Gastrocnemius medialis (tissue), 4 donors: ENCODE measurements at regions of chr9 and their contacts with region 1.

Region 1: GRCh38 chr9:35116898-35117551 is 1.4 kb upstream of the ATOSB start:
- DNase-seq: peak; percentile 86 to 90
- ATAC-seq: peak; percentile 84 to 85
- H3K4me3 ChIP-seq: peak overlapping the region; percentile 58 to 73 (median 68)
- H3K27ac ChIP-seq: peak overlapping the region; percentile 83 to 92 (median 84)
- H3K4me1 ChIP-seq: peaks cover 21 to 22% of the 10 kb centered on the region in 2 donors
- H3K27me3 ChIP-seq: no peaks in the 10 kb centered on the region
- CTCF ChIP-seq: peak; percentile 86 to 97 (median 93)
- POLR2A ChIP-seq: no peak

Region 2: GRCh38 chr9:34458013-34458958 is 658.7 kb before region 1 on chr9 and contains the starts of genes DNAI1 and FAM219A:
- in situ Hi-C with region 1: no loop called
- intact Hi-C with region 1: loop called (anchors 10 kb)
- DNase-seq: peak; percentile 98
- ATAC-seq: peak; percentile 89 to 92
- H3K4me3 ChIP-seq: peak within 1 kb of the TSS; percentile 68 to 95 (median 80)
- H3K27ac ChIP-seq: peak within 1 kb of the TSS; percentile 79 to 94 (median 90)
- H3K4me1 ChIP-seq: peaks cover 38 to 53% of the 10 kb centered on the region in 2 donors
- H3K27me3 ChIP-seq: no peaks in the 10 kb centered on the region
- CTCF ChIP-seq: no peak
- POLR2A ChIP-seq: peak; percentile 97 to 98
- total RNA-seq, gene DNAI1: 0.49 TPM in 1 of 4 donors, not detected in the others
- total RNA-seq, gene FAM219A: 29.5 to 58.4 (median 41.8) TPM

Region 3: GRCh38 chr9:35193762-35194161 is 76.7 kb after region 1 on chr9:
- in situ Hi-C with region 1: no loop called
- intact Hi-C with region 1: no loop called
- DNase-seq: peak in 1 of 2 donors; percentile 17
- ATAC-seq: no peak
- H3K4me3 ChIP-seq: no peak overlapping the region
- H3K27ac ChIP-seq: peak overlapping the region in 1 of 4 donors; percentile 0
- H3K4me1 ChIP-seq: peaks cover 12 to 22% of the 10 kb centered on the region in 2 donors
- H3K27me3 ChIP-seq: no peaks in the 10 kb centered on the region
- CTCF ChIP-seq: peak in 2 of 5 experiments; percentile 26 to 28
- POLR2A ChIP-seq: no peak

Region 4: GRCh38 chr9:35258676-35259474 is 141.8 kb after region 1 on chr9:
- in situ Hi-C with region 1: loop called in 3 of 4 experiments (anchors 5 to 10 kb)
- intact Hi-C with region 1: loop called (anchors 1 kb)
- DNase-seq: peak; percentile 46 to 70
- ATAC-seq: peak; percentile 84 to 89
- H3K4me3 ChIP-seq: no peak overlapping the region
- H3K27ac ChIP-seq: peak overlapping the region in 3 of 4 donors; percentile 3 to 47 (median 25)
- H3K4me1 ChIP-seq: peaks cover 10 to 17% of the 10 kb centered on the region in 2 donors
- H3K27me3 ChIP-seq: no peaks in the 10 kb centered on the region
- CTCF ChIP-seq: peak; percentile 53 to 76 (median 69)
- POLR2A ChIP-seq: no peak

Region 5: DNA sequence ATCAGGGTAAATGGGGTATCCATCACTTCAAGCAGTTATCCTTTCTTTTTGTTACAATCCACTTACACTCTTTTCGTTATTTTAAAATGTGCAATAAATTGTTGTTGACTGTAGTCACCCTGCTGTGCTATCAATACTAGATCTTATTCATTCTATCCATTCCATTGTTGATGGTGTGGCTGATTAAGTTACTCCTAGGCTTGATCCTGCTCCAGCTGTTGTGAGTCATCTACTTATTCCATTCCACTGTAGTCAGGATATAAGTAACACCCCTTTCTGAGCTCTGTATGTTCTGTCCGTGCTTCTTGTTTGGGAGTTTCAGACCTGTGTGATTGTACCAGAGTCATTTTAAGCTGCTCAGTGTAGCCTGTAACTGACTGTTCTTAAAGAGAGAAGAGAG is 250.4 kb after region 1 on chr9:
- in situ Hi-C with region 1: no loop called
- intact Hi-C with region 1: loop called (anchors 10 kb)
- DNase-seq: peak; percentile 46 to 65
- ATAC-seq: peak; percentile 96 to 97
- H3K4me3 ChIP-seq: no peak overlapping the region
- H3K27ac ChIP-seq: peak overlapping the region; percentile 81 to 86 (median 82)
- H3K4me1 ChIP-seq: peaks cover 45 to 55% of the 10 kb centered on the region in 2 donors
- H3K27me3 ChIP-seq: no peaks in the 10 kb centered on the region
- CTCF ChIP-seq: no peak
- POLR2A ChIP-seq: peak in 1 of 2 donors; percentile 27

Region 6: DNA sequence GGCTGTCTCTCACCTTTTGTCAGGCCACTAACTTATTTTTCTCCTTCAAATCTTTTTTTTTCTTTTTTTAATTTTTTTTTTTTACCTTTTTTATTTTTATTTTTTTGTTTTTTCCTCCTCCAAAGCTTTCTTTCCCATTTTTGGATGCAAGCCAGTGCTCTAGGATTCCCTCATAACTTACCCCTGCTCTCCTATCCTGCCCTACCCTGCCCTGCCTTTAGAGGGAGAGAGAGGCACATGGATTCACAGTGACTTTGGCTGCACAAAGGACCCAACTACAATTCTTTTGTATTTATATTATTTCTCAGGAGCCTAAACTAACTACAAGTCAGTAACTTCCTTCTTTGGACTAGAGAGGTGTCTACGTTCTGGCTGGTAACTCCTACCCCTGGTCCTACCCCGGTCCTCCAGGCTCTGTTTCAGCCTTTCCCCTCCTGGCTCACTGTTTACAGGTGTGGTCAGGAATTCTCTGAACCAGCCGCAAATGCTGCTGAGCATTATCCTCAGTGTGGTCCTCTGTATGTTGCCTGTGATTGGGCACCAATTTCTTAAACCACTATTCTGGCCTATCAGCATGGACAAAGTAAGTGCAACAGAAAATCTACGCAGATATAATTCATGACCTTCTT is 364.4 kb after region 1 on chr9:
- in situ Hi-C with region 1: loop called (anchors 5 kb)
- intact Hi-C with region 1: loop called (anchors 1 kb)
- DNase-seq: peak; percentile 27 to 71
- ATAC-seq: peak; percentile 68 to 78
- H3K4me3 ChIP-seq: no peak overlapping the region
- H3K27ac ChIP-seq: no peak overlapping the region
- H3K4me1 ChIP-seq: no peaks in the 10 kb centered on the region
- H3K27me3 ChIP-seq: no peaks in the 10 kb centered on the region
- CTCF ChIP-seq: peak; percentile 74 to 89 (median 78)
- POLR2A ChIP-seq: no peak

Region 7: DNA sequence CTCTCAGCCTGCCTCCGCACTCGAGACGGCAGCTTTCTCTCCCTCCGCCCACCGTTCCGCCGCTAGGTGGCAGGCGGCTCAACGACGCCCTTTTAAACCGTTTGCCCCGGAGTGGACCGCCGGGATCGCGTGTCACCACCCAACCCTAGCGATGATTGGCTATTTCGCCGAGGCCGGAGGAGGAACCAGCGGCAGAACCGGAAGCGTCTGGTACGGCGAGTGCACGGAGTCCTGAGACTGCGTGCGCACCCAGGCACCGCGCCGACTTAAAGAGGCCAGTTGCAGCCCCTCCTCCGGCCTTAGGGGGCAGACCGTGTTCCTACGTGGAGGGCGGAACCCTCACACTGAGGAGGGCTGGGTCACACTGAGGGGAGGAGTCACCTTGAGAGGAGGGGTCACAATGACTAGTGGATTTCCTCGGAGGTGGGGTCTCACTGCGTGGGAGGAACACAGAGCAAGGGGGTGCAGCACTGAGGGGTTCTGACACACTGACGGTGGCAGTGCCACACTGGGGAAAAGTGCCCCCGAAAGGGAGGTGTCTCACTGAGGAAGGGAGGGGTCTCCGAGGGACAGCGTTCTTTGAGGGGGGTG is 487.1 kb after region 1 on chr9:
- in situ Hi-C with region 1: no loop called
- intact Hi-C with region 1: loop called (anchors 2 kb)
- DNase-seq: peak; percentile 100
- ATAC-seq: peak; percentile 82 to 83
- H3K4me3 ChIP-seq: peak overlapping the region; percentile 64 to 80 (median 74)
- H3K27ac ChIP-seq: peak overlapping the region; percentile 93 to 99 (median 99)
- H3K4me1 ChIP-seq: peaks cover 33 to 41% of the 10 kb centered on the region in 2 donors
- H3K27me3 ChIP-seq: no peaks in the 10 kb centered on the region
- CTCF ChIP-seq: peak; percentile 96 to 100 (median 98)
- POLR2A ChIP-seq: peak; percentile 85 to 91